BJ (cell line): ENCODE measurements at regions of chr6 and their contacts with region 1.

Region 1: DNA sequence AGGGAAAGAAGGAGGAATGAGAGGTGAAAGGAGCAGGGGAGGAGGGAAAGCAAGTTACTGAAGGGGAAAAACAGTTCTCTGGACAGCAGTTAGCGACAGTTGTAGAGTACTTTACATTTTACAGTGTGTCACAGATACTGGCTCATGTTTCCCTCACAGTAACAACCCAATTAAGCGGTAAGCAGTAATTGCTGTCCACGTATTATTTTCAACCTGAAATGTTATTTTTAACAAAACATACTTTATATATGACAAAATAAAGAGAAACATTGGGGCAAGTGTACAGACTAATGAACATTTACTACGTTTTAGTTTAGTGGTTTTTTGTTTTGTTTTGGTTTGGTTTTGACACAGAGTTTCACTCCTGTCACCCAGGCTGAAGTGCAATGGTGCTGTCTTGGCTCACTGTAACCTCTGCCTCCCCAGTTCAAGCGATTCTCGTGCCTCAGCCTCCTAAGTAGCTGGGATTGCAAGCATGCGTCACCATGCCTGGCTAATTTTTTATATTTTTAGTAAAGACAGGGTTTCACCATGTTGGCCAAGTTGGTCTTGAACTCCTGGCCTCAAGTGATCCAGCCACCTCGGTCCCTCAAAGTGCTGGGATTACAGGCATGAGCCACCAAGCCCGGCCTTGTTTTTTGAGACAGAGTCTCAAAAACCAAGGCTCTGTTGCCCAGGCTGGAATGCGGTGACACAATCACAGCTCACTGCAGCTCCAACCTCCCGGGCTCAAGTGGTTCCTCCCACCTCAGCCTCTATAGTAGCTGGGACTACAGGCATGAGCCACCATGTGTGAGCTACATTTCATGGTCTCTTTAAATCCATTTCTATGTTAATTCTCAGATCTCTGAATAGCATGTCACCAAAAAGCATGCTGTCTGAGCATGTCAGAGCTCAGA is 22.6 kb upstream of the BTN3A2 start:
- DNase-seq: no peak
- H3K4me3 ChIP-seq: peak overlapping the region; percentile 14; the same call in 1 of the 2 replicates
- H3K27me3 ChIP-seq: no peaks in the 10 kb centered on the region
- CTCF ChIP-seq: no peak

Region 2: DNA sequence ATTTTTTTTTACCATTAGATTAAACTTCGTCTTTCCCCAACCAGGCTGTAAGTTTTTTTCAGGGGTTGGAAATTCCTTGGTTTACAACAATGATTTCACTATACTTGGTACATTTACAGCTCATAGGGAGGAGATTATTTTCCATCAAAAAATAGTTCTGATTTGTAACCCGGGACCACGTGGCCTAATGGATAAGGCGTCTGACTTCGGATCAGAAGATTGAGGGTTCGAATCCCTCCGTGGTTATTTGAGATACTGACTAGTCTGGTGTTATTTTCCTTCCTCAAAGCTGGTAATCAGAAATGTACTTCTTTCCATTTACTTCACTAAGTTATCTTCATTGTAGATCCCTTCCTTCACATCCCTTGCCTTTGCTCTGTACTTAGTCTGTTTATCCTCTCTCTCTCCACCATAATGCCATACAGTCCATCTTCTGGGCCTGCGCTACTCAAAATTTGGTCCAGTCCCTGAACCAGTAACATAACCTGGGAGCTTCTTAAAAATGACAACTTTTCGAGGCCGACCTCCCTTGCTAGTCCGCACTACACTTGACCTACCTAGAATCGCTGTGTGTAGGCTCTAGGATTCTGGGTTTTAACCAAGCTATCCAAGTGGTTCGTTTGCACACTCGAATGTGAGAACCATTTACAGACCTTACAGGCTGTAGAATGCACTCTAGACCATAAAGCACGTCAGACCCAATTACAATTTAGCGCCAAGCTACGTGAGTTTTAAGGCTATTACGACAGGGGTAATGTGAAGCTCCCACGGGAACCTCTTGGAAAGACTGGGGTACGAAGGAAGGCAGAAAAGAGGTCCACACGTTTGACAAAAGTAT is 19.5 kb before region 1 on chr6:
- CTCF ChIA-PET with region 1: interaction called, 11 read pairs
- POLR2A ChIA-PET with region 1: no interaction called
- DNase-seq: peak; percentile 77
- H3K4me3 ChIP-seq: peak overlapping the region; percentile 64
- H3K27me3 ChIP-seq: no peaks in the 10 kb centered on the region
- CTCF ChIP-seq: no peak

Region 3: DNA sequence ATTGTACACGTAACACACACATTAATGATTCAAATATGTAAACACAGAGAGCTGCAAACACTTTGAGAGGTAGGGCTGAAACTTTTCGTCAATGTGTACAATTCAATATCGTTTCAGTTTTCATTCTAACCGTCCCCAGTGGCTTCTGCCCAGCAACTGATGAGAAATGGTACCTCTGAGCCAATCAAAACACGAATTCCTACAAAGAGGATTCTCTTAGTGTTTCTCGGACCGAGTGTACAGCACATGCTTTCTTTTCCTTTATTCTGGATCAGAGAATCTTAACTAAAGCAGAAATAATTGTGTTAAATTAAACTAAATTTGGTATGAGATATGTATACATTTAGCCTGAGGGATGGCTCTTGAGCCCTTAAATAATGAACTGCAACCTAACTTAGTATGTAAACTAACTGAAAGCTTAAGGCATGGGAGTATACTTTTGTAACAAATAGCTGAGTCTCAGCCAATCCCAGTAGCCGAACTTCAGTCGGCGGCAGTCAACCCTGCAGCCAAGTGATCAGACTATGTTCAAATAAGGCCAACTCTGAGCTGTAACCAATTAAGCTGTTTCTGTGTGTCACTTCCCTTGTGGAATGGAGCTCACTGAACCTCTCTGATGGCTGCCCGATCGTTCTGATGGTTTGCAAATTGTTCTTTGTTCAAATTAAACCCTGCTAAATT is 131.5 kb after region 1 on chr6:
- CTCF ChIA-PET with region 1: interaction called, 12 read pairs
- POLR2A ChIA-PET with region 1: no interaction called
- DNase-seq: peak; percentile 88
- H3K4me3 ChIP-seq: peak overlapping the region; percentile 41
- H3K27me3 ChIP-seq: no peaks in the 10 kb centered on the region
- CTCF ChIP-seq: no peak

Region 4: GRCh38 chr6:26553635-26554446 is 211.5 kb after region 1 on chr6:
- CTCF ChIA-PET with region 1: interaction called, 10 read pairs
- POLR2A ChIA-PET with region 1: no interaction called
- DNase-seq: peak; percentile 91
- H3K4me3 ChIP-seq: peak overlapping the region; percentile 38
- H3K27me3 ChIP-seq: no peaks in the 10 kb centered on the region
- CTCF ChIP-seq: no peak

Region 5: GRCh38 chr6:26659042-26659999 is 317.0 kb after region 1 on chr6 and contains the start of gene ZNF322:
- CTCF ChIA-PET with region 1: no interaction called
- POLR2A ChIA-PET with region 1: no interaction called
- DNase-seq: peak; percentile 55
- H3K4me3 ChIP-seq: peak within 1 kb of the TSS; percentile 97
- H3K27me3 ChIP-seq: no peaks in the 10 kb centered on the region; the same call in 1 of the 2 replicates
- CTCF ChIP-seq: no peak
- polyA plus RNA-seq, gene ZNF322: 13.5 and 13.9 TPM in 2 replicates